Activated CD8-positive, alpha-beta T cell treated with anti-CD3 and anti-CD28 coated beads, Interleukin-2, amount 10 ng/mL, durations not matched to agents 7 days and 5 days (primary cell): ENCODE measurements at regions of chr2 and their contacts with region 1.

Region 1: DNA sequence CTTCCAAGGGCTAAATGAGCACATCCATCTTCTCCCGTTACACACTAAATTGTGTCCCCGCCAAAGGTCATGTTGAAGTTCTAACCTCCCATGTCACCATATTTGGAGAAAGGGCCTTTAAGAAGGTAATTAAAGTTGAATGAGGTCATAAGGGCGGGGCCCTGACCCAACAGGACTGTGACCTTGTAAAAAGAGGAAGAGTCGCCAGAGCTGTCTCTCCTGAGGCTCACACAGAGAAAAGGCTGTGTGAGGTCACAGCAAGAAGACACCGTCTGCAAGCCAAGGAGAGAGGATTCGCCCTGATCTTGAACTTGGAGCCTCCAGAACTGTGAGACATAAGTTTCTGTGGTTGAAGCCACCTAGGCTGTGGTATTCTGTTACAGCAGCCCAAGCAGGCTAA is 24.1 kb downstream of the TRABD2A start:
- DNase-seq: peak; percentile 75
- ATAC-seq: peak; percentile 80
- H3K4me3 Mint-ChIP-seq: peak overlapping the region; percentile 40
- H3K27ac Mint-ChIP-seq: peak overlapping the region; percentile 87
- H3K4me1 Mint-ChIP-seq: peaks cover 92% of the 10 kb centered on the region
- H3K27me3 Mint-ChIP-seq: no peaks in the 10 kb centered on the region

Region 2: GRCh38 chr2:84832772-84833461 is 23.9 kb before region 1 on chr2:
- CTCF ChIA-PET with region 1: interaction called, 11 read pairs
- POLR2A ChIA-PET with region 1: interaction called, 5 read pairs
- DNase-seq: peak; percentile 46
- ATAC-seq: peak; percentile 77
- H3K4me3 Mint-ChIP-seq: peak overlapping the region; percentile 73
- H3K27ac Mint-ChIP-seq: peak overlapping the region; percentile 93
- H3K4me1 Mint-ChIP-seq: peaks cover 21% of the 10 kb centered on the region
- H3K27me3 Mint-ChIP-seq: no peaks in the 10 kb centered on the region

Region 3: DNA sequence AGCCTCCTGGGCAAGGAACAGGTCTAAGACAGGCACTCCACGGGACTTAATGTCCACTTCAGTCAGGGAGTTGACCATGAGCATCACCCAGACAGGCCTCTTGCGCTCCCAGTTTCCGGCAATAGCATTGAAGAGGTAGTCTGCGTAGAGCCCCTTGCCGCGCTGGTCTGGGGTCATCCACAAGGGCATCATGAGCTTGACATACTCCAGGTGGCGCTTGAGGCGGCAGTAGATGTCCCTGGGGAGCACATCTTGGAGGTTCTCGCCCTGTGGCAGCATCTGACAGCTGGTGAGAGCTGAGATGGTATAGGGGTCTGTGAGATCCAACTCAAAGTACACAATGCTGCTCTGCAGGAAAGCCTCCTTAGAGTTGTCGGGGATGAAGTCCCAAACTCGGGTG is 13.5 kb after region 1 on chr2:
- CTCF ChIA-PET with region 1: interaction called, 14 read pairs
- POLR2A ChIA-PET with region 1: no interaction called
- DNase-seq: peak; percentile 20
- ATAC-seq: no peak
- H3K4me3 Mint-ChIP-seq: no peak overlapping the region
- H3K27ac Mint-ChIP-seq: peak overlapping the region; percentile 39
- H3K4me1 Mint-ChIP-seq: peaks cover 81% of the 10 kb centered on the region
- H3K27me3 Mint-ChIP-seq: no peaks in the 10 kb centered on the region

Region 4: DNA sequence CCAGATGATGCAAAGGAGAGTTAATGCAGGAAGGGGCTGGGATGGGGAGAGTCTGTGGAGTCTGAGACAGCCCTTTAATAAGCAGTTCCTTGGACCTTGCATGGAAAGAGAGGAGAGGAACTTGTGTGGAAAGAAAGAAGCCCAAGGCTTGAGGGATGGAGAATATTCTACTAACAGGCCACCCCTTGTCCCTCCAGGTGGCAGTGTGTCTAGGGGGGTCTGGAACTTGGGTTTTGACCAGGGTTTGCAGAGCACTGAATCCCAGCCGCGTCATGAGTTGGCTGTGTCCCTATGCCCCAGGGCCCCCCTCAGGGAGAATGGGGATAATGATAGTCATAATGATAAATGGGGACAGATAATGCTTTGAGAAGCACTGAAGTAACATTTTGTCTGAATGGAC is 291.4 kb after region 1 on chr2:
- CTCF ChIA-PET with region 1: no interaction called
- POLR2A ChIA-PET with region 1: no interaction called
- DNase-seq: no peak
- ATAC-seq: no peak
- H3K4me3 Mint-ChIP-seq: no peak overlapping the region
- H3K27ac Mint-ChIP-seq: no peak overlapping the region
- H3K4me1 Mint-ChIP-seq: no peaks in the 10 kb centered on the region
- H3K27me3 Mint-ChIP-seq: peaks cover 21% of the 10 kb centered on the region